Mammary epithelial cell (primary cell): ENCODE measurements at regions of chr18 and their contacts with region 1.

Region 1: DNA sequence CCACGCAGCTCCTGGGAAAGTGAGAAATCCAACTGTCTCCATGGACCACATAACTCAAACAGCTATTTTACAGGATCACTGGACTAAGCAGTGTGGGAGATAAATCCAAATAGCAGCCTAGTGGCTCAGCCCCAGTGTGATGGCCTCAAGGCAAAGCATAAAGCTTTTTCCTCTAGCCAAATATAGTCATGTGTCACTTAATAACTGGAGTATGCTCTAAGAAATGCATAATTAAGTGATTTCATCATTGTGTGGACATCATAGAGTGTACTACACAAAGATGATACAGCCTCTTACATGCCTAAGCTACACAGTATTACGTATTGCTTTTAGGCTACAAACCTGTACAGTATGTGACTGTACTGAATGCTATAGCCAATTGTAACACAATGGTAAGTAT is 31.8 kb upstream of the ST8SIA3 start:
- DNase-seq: no peak
- H3K4me3 ChIP-seq: no peak overlapping the region
- H3K27ac ChIP-seq: no peak overlapping the region
- H3K4me1 ChIP-seq: no peaks in the 10 kb centered on the region
- H3K27me3 ChIP-seq: peaks cover 3% of the 10 kb centered on the region
- CTCF ChIP-seq: no peak

Region 2: DNA sequence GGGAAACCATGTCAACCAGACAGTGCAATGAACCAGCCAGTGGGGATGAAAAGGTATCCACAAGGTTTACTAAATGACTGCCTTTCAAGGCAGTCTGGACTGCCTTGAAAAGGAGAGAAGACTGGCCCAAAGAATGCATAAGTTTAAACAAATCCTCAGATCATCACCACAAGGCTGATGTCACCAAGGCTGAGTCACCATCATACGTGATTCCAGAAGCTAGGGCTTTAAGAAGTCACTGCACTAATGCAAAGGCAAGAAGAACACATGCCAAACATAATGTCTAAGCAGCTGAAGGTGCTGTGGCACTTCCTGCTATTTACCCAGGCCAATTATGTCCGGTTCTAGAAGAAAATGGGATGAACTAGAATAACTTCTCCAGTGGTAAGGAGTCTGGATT is 76.8 kb after region 1 on chr18:
- CTCF ChIA-PET with region 1: no interaction called
- dilution Hi-C with region 1: loop called (anchors 5 kb)
- in situ Hi-C with region 1: no loop called
- intact Hi-C with region 1: no loop called
- DNase-seq: peak; percentile 25
- H3K4me3 ChIP-seq: no peak overlapping the region
- H3K27ac ChIP-seq: no peak overlapping the region
- H3K4me1 ChIP-seq: no peaks in the 10 kb centered on the region
- H3K27me3 ChIP-seq: no peaks in the 10 kb centered on the region
- CTCF ChIP-seq: no peak

Region 3: DNA sequence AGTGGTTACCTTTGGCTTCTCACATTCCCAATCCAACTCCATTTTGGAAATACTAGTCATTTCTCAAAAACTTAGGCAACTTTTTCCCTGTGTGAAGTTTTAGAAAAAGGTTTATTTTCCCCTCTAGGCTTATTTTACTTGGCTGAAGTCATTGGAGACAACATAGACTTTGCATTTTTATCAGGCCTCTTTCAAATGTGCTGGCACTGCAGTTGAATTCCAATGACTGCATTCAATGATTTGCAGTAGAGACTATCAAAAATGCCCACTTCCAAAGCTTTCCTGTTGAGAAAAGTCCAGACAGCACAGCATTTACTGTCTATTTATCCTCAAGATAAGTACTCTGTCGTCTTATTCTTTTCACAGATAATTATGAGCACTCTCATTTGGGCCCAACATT is 184.6 kb after region 1 on chr18:
- CTCF ChIA-PET with region 1: no interaction called
- dilution Hi-C with region 1: no loop called
- in situ Hi-C with region 1: no loop called
- intact Hi-C with region 1: no loop called
- DNase-seq: no peak
- H3K4me3 ChIP-seq: no peak overlapping the region
- H3K27ac ChIP-seq: no peak overlapping the region
- H3K4me1 ChIP-seq: no peaks in the 10 kb centered on the region
- H3K27me3 ChIP-seq: no peaks in the 10 kb centered on the region
- CTCF ChIP-seq: no peak